Breast epithelium (tissue), 4 donors: ENCODE measurements at regions of chr15 and their contacts with region 1.

Region 1: GRCh38 chr15:62888623-62889022 is 153.9 kb upstream of the TPM1 start:
- DNase-seq: no peak
- H3K4me3 ChIP-seq: no peak overlapping the region
- H3K27ac ChIP-seq: peak overlapping the region; percentile 20 to 70
- H3K4me1 ChIP-seq: no peaks in the 10 kb centered on the region
- H3K27me3 ChIP-seq: no peaks in the 10 kb centered on the region
- CTCF ChIP-seq: no peak
- POLR2A ChIP-seq: no peak

Region 2: GRCh38 chr15:62845241-62846133 is 43.1 kb before region 1 on chr15:
- intact Hi-C with region 1: loop called (anchors 1 kb)
- DNase-seq: no peak
- H3K4me3 ChIP-seq: no peak overlapping the region
- H3K27ac ChIP-seq: no peak overlapping the region
- H3K4me1 ChIP-seq: no peaks in the 10 kb centered on the region
- H3K27me3 ChIP-seq: no peaks in the 10 kb centered on the region
- CTCF ChIP-seq: no peak
- POLR2A ChIP-seq: no peak